A549 (cell line): ENCODE measurements at regions of chr1 and their contacts with region 1.

Region 1: DNA sequence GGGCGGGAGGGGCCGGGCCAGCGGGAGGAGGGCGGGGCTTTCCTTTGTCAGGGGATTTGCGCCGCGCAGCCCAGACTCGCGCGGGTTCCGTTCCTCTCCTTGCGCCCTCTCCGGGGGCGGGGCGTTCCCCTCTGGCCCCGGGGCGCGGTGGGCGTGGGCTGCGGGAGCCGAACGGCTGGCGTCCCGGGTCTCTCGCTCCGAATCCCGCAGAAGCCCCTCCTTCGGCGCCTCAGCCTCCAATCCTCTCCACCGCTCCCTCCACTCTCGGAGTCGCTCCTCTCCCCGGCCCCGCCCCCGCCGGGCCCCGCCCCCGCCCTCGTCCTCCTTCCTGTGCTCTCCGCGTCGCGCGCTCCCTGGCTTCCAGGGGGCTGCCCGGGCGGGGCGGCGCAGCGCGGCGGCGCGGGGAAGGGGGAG is 82.8 kb upstream of the BMP8A start:
- DNase-seq: peak; percentile 86 to 91
- ATAC-seq: peak; percentile 86 to 91
- H3K4me3 ChIP-seq: peak overlapping the region; percentile 71
- H3K27ac ChIP-seq: peak overlapping the region; percentile 91 to 97
- H3K4me1 ChIP-seq: peaks cover 65% of the 10 kb centered on the region
- CTCF ChIP-seq: no peak
- EP300 ChIP-seq: no peak
- POLR2A ChIP-seq: 0 out of 2 replicates have a peak, but pooled peaks have one; percentile 9
- RAD21 ChIP-seq: no peak

Region 2: DNA sequence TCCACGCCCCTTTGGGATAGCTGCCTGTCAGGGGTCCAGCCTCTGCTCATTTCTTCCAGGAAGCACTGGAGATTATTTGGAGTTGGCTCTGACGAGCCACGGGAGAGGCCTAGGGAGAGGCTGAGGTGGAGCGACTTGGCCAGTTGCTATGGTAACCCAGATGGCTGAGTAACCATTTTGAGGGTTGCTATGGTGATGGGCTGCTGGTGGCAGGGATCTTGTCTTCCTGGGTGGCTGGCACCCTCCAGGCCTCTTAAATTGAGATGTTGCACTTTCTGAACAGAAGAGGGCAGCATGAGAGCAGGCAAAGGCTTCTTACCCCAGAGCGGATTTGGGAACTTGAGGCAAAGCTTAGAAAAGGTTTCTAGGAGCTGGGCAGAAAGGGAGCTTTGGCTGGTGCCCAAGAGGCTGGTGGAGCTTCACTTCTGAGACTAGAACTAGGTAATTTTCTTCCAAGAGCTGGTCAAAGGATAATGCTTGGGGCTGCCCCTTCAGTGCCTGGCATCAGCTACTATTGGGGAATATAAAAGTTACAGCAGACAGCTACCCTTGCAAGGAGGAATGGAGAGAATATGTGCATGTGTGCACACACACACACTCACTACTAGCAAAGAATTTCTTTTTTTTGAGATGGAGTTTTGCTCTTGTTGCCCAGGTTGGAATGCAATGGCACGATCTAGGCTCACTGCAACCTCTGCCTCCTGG is 309.9 kb before region 1 on chr1:
- CTCF ChIA-PET with region 1: interaction called, 16 read pairs
- POLR2A ChIA-PET with region 1: no interaction called
- DNase-seq: peak; percentile 93
- ATAC-seq: peak; percentile 82 to 87
- H3K4me3 ChIP-seq: no peak overlapping the region
- H3K27ac ChIP-seq: peak overlapping the region in 1 of 2 experiments; percentile 38; a peak in 1 of 6 replicates
- H3K4me1 ChIP-seq: peaks cover 17% of the 10 kb centered on the region
- CTCF ChIP-seq: peak; percentile 76
- EP300 ChIP-seq: no peak
- POLR2A ChIP-seq: no peak
- RAD21 ChIP-seq: peak; percentile 85 to 92

Region 3: DNA sequence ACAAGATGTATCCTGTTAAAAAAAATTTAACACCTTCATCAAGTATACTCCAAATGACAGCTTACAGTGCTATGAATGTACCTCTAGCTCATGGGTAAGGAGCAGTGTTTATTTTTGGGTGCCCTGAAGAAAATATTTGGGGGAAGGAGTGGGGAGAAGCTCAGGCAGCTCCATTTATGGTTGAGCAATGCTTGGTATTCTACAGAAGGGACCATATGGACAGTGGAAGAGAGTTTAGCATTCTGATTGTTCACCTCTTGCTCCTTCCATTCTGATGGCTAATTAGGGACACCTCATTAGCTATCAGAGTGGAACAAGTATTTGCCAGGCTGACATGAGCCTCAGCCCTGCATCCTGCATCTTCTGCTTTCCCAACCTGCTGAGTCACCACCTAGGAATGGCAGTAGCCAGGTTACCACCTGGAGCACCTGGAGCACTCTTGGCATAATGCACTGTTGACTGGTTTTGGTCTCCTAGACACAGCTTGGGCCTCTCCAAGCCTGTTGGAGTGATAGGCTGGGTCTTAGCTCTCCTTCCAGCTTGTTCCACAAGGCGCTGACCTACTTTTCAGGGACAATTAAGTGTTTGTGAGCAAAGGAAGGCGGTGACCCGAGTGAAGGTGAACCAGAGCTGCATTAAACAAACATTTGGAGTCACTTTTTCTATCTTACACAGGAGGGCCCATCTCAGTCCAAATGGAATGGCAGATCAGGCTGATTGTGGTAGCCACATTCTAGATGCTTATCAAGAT is 266.1 kb before region 1 on chr1:
- CTCF ChIA-PET with region 1: no interaction called
- POLR2A ChIA-PET with region 1: no interaction called
- DNase-seq: no peak
- ATAC-seq: no peak; a peak in 1 of 6 replicates
- H3K4me3 ChIP-seq: no peak overlapping the region
- H3K27ac ChIP-seq: peak overlapping the region in 1 of 2 experiments; percentile 5; a peak in 1 of 6 replicates
- H3K4me1 ChIP-seq: peaks cover 24% of the 10 kb centered on the region
- CTCF ChIP-seq: no peak
- EP300 ChIP-seq: no peak
- POLR2A ChIP-seq: no peak
- RAD21 ChIP-seq: no peak

Region 4: DNA sequence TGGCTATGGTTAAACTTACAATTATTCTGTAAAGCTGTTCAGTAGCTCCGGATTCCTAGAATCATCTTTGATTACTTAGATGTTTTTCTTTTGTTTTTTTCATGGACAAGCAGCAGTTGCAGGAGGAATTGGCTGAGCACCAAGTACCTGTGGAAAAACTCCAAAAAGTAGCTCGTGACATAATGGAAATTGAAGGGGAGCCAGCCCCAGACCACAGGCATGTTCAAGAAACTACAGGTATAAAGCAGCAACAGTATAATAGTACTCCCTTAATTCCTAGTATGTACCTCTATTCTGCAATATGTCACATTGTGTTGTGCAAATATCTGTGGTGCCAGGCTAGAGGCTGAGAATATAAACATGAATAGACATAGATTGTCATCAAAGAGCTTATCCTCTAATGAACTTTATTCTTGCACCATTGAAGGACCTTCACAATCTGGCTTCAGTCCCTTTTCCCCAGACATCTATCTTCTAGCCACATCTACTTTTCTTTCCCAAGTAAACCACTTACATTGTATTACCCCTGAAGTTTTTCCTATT is 49.5 kb before region 1 on chr1:
- CTCF ChIA-PET with region 1: interaction called, 14 read pairs
- POLR2A ChIA-PET with region 1: no interaction called
- DNase-seq: no peak
- ATAC-seq: no peak
- H3K4me3 ChIP-seq: no peak overlapping the region
- H3K27ac ChIP-seq: no peak overlapping the region
- H3K4me1 ChIP-seq: no peaks in the 10 kb centered on the region
- CTCF ChIP-seq: no peak
- EP300 ChIP-seq: no peak
- POLR2A ChIP-seq: no peak
- RAD21 ChIP-seq: no peak

Region 5: DNA sequence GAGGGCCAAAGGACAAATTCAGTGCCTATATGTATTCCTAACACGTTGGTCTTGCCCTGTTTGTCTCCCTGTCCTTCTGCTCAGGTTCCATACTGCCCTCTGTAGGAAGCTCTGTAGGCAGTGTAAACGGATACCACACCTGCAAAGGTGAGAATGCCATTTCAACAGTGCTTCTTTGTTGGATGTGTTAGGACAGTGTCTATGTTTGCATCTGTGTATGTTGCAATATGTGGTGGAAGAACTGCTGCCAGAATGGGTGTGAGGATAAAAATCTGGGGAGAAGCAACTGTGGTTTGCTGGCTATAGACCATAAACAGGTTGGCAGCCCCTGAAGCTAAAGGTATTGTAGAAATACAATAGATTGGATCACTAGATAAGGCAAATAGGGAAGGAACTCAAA is 30.3 kb before region 1 on chr1:
- CTCF ChIA-PET with region 1: interaction called, 56 read pairs
- POLR2A ChIA-PET with region 1: no interaction called
- DNase-seq: peak; percentile 30 to 47
- ATAC-seq: peak in 1 of 2 experiments; percentile 79; a peak in 4 of 6 replicates
- H3K4me3 ChIP-seq: no peak overlapping the region
- H3K27ac ChIP-seq: no peak overlapping the region
- H3K4me1 ChIP-seq: no peaks in the 10 kb centered on the region
- CTCF ChIP-seq: peak; percentile 55
- EP300 ChIP-seq: no peak
- POLR2A ChIP-seq: no peak
- RAD21 ChIP-seq: peak; percentile 48 to 50; a peak in 4 of 5 replicates

Region 6: GRCh38 chr1:39398278-39399021 is 10.2 kb before region 1 on chr1:
- CTCF ChIA-PET with region 1: interaction called, 50 read pairs
- POLR2A ChIA-PET with region 1: interaction called, 30 read pairs
- DNase-seq: peak; percentile 89 to 93
- ATAC-seq: peak; percentile 95 to 97
- H3K4me3 ChIP-seq: 0 out of 3 replicates have a peak overlapping the region, but pooled peaks have one; percentile 9
- H3K27ac ChIP-seq: peak overlapping the region; percentile 89 to 93
- H3K4me1 ChIP-seq: peaks cover 69% of the 10 kb centered on the region
- CTCF ChIP-seq: no peak
- EP300 ChIP-seq: peak; percentile 76 to 86; a peak in 4 of 5 replicates
- POLR2A ChIP-seq: no peak
- RAD21 ChIP-seq: no peak; a peak in 2 of 5 replicates

Region 7: DNA sequence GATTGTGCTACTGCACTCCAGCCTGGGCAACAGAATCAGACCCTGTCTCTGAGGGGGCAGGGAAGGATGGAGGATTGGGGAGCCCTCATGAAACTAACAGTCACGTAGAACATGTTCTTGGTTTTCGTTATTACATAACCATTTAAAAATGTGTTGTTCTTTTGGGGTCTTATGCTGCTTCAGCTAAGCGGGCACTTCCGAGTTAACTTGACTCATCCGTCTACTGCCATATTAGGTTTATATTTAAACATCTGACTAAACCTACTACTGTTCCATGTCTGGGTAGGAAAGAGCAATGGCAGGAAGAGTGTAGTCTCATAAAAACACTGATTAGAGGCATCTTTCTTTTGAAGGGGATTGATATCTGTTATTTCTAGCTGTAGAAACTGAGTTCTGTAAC is 23.3 kb after region 1 on chr1:
- CTCF ChIA-PET with region 1: interaction called, 13 read pairs
- POLR2A ChIA-PET with region 1: no interaction called
- DNase-seq: no peak
- ATAC-seq: no peak
- H3K4me3 ChIP-seq: no peak overlapping the region
- H3K27ac ChIP-seq: no peak overlapping the region
- H3K4me1 ChIP-seq: peaks cover 8% of the 10 kb centered on the region; the same call in 1 of the 3 replicates
- CTCF ChIP-seq: no peak
- EP300 ChIP-seq: no peak
- POLR2A ChIP-seq: no peak
- RAD21 ChIP-seq: no peak